AG04450 (cell line): ENCODE measurements at regions of chr14 and their contacts with region 1.

Region 1: GRCh38 chr14:103078093-103078749 is 5.8 kb upstream of the LBHD2 start:
- DNase-seq: peak; percentile 48
- H3K4me3 ChIP-seq: no peak overlapping the region
- H3K27ac ChIP-seq: no peak overlapping the region
- H3K27me3 ChIP-seq: peaks cover 11% of the 10 kb centered on the region
- CTCF ChIP-seq: peak; percentile 84

Region 2: GRCh38 chr14:103041464-103041863 is 36.8 kb before region 1 on chr14:
- CTCF ChIA-PET with region 1: no interaction called
- POLR2A ChIA-PET with region 1: no interaction called
- DNase-seq: no peak
- H3K4me3 ChIP-seq: no peak overlapping the region
- H3K27ac ChIP-seq: no peak overlapping the region
- H3K27me3 ChIP-seq: no peaks in the 10 kb centered on the region
- CTCF ChIP-seq: no peak

Region 3: DNA sequence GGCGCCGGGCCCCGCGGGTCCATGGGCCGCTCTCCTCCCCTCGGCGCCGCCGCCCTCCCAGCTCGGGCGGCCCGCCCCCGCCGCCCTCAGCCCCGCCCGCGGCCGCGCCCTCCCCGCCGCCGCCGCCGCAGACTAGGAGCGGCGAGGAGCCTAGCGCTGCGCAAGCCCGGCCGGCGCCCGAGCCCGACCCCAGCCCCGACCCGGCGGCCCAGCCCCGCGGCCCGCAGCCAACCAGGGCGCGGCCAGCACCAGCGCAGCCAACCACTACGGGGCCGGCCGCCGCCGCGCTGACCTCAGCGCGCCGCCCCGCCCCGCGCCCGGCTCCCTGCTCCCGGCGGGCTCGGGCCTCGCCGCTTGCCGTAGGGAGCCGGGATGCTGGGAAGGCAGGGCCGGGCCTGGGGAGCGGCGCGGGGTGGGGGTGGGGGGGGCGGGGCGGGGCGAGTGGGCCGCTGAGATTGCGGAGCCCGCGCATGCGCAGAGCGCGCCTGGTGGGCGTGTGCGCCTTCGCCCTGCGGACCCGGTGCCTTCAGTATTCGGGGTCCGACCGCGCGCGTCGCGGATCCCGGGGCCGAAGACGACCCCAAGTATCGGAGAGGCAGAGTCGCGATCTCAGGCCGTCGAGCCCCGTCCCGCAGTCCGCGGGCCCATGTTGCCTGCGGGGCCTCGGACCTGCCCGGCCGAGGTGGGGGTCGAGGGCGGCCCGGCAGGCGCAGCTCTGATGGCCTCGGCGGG is 20.7 kb before region 1 on chr14 and contains the start of gene CDC42BPB:
- CTCF ChIA-PET with region 1: interaction called, 13 read pairs
- POLR2A ChIA-PET with region 1: no interaction called
- DNase-seq: peak; percentile 67
- H3K4me3 ChIP-seq: peak within 1 kb of the TSS; percentile 96
- H3K27ac ChIP-seq: peak within 1 kb of the TSS; percentile 57
- H3K27me3 ChIP-seq: no peaks in the 10 kb centered on the region
- CTCF ChIP-seq: no peak
- polyA plus RNA-seq, gene CDC42BPB: 57.0 and 66.8 TPM in 2 replicates

Region 4: GRCh38 chr14:103185051-103185992 is 107.1 kb after region 1 on chr14:
- CTCF ChIA-PET with region 1: interaction called, 19 read pairs
- POLR2A ChIA-PET with region 1: no interaction called
- DNase-seq: no peak
- H3K4me3 ChIP-seq: no peak overlapping the region
- H3K27ac ChIP-seq: no peak overlapping the region
- H3K27me3 ChIP-seq: peaks cover 52% of the 10 kb centered on the region
- CTCF ChIP-seq: peak; percentile 71

Region 5: GRCh38 chr14:103281496-103282231 is 203.4 kb after region 1 on chr14:
- CTCF ChIA-PET with region 1: interaction called, 12 read pairs
- POLR2A ChIA-PET with region 1: no interaction called
- DNase-seq: no peak
- H3K4me3 ChIP-seq: no peak overlapping the region
- H3K27ac ChIP-seq: no peak overlapping the region
- H3K27me3 ChIP-seq: peaks cover 36% of the 10 kb centered on the region
- CTCF ChIP-seq: peak; percentile 66

Region 6: DNA sequence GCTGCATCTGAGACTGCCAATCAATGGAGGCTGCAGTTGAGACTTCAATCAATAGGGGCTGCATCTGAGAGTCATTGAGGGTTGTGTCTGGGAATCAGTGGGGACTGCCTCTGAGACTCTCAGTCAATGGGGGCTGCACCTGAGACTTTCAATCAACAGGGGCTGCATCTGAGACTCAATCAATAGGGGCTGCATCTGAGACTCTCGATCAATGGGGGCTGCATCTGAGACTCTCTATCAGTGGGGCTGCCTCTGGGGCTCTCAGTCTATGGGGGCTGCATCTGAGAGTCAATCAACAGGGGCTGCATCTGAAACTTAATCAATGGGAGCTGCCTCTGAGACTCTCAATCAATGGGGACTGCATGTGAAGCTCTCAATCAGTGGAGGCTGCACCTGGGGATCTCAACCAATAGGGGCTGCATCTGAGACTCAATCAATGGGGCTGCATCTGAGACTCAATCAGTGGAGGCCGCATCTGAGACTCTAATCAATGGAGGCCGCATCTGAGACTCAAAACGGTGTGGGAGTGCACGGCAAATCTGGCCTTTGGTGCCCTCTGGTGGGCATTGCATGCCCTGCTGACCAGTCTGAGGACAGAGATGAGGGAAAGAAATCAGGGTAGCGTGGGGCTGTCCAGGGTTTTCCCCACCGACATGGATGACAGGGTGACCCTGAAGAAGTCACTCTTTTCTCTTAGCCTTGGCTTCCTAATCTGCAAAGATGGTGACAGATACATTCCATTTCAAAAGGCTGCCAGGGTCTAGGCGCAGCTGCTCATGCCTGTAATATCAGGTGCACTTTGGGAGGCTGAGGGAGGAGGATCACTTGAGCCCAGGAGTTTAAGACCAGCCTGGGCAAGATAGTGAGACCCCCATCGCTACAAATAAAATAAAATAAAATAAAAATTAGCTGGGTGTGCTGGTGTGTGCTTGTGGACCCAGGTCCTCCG is 214.5 kb after region 1 on chr14:
- CTCF ChIA-PET with region 1: interaction called, 63 read pairs
- POLR2A ChIA-PET with region 1: interaction called, 10 read pairs
- DNase-seq: peak; percentile 21
- H3K4me3 ChIP-seq: no peak overlapping the region
- H3K27ac ChIP-seq: no peak overlapping the region
- H3K27me3 ChIP-seq: peaks cover 40% of the 10 kb centered on the region
- CTCF ChIP-seq: peak; percentile 97

Region 7: DNA sequence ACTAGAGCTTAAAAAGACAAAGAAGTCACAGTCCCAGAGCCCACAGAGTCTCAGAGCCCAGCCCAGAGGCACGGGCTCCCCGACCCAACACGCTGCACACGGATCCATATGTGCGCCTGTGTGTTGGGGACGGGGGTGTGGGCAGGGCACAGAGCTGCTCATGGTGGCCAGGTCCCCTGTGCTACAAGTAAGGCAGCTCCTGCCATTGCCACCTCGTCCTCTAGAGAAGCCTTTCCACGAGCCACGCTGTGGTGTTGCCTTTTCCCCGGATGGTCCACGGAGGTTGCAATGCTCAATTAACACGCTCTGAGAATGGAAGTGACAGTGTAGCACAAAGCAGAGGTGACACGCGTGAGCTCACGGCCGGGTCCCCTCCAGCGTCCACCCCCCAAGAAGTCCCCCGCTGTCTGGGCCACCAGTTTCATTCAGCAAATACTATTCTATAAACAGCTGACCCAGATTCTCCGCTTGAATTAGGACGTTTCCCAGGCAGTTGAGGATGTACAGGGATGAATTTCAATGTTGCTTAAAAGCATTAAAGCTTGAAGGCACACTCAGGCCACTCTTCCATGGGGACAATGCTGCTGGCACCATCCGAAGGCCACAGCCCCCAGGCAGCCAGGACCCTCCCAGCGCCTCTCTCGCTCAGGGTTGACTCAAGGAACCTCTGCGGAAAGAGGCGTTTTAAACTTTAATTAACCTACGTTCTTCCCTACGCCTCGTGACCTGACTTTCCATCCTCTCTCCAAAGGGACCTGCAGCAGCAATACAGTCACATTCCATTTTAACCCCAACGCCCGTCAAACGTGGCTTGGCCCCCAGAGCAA is 233.2 kb after region 1 on chr14:
- CTCF ChIA-PET with region 1: no interaction called
- POLR2A ChIA-PET with region 1: no interaction called
- DNase-seq: no peak
- H3K4me3 ChIP-seq: no peak overlapping the region
- H3K27ac ChIP-seq: no peak overlapping the region
- H3K27me3 ChIP-seq: peaks cover 12% of the 10 kb centered on the region
- CTCF ChIP-seq: no peak